ENCODE measurements at regions of chr2 and their contacts with region 1.

Region 1: DNA sequence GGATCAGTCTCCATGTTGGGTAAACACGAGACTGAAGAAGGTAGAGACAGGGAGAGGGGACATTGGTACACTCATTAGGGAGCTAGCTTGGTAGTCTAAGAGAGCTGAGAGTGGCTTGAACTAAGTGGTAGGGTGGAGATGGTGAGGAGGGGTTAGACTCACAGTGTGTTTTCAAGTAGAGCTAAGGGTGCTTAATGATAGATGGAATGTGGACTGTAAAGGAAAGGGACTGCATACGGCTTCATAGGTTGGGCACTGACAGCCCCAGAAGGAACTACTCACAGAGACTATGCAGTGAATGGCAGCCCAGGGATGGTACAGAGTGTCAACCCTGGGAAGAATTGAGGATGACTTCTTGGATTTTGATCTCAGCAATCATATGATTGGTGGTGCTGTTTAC is 178.1 kb downstream of the CCDC85A start:
- DNase-seq: no peak
- ATAC-seq: no peak
- H3K4me3 ChIP-seq: no peak overlapping the region
- H3K27ac ChIP-seq: no peak overlapping the region
- H3K4me1 ChIP-seq: no peaks in the 10 kb centered on the region
- H3K27me3 ChIP-seq: no peaks in the 10 kb centered on the region
- CTCF ChIP-seq: no peak
- EP300 ChIP-seq: no peak
- POLR2A ChIP-seq: no peak
- RAD21 ChIP-seq: no peak

Region 2: GRCh38 chr2:57981083-57981768 is 1619.4 kb after region 1 on chr2:
- CTCF ChIA-PET with region 1: no interaction called
- POLR2A ChIA-PET with region 1: no interaction called
- in situ Hi-C with region 1: no loop called
- intact Hi-C with region 1: loop called (anchors 5 kb)
- DNase-seq: no peak
- ATAC-seq: no peak
- H3K4me3 ChIP-seq: no peak overlapping the region
- H3K27ac ChIP-seq: no peak overlapping the region
- H3K4me1 ChIP-seq: no peaks in the 10 kb centered on the region
- H3K27me3 ChIP-seq: no peaks in the 10 kb centered on the region
- CTCF ChIP-seq: no peak
- EP300 ChIP-seq: no peak
- POLR2A ChIP-seq: no peak
- RAD21 ChIP-seq: no peak

Measured in HepG2 (cell line).